Right ventricle myocardium inferior (tissue), 1 donor: ENCODE measurements at regions of chr10 and their contacts with region 1.

Region 1: GRCh38 chr10:51063659-51064535 is 10.4 kb upstream of the PRKG1 start:
- DNase-seq: no peak
- ATAC-seq: peak; percentile 54

Region 2: DNA sequence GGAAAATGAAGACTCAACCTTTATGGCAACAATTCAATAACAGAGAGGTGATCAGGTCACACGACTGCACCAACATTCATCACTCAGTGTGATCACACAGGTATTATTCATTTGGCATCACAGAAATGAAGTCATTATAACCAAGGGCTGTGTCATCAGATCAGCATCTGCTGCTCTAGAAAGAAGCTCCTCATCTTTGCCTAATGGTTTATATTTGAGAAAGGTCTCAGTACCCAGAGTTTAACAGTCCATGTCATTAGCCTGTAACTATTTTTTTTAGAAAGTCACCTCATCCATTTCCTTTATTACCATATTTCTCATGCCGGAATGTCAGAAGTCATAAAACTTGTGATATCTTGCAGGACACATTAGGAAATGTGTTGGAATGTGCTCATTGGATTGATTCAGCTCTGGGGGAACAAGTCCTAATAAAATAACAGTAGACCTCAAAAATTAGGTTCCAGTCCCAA is 34.7 kb before region 1 on chr10:
- intact Hi-C with region 1: no loop called
- DNase-seq: no peak
- ATAC-seq: no peak

Region 3: DNA sequence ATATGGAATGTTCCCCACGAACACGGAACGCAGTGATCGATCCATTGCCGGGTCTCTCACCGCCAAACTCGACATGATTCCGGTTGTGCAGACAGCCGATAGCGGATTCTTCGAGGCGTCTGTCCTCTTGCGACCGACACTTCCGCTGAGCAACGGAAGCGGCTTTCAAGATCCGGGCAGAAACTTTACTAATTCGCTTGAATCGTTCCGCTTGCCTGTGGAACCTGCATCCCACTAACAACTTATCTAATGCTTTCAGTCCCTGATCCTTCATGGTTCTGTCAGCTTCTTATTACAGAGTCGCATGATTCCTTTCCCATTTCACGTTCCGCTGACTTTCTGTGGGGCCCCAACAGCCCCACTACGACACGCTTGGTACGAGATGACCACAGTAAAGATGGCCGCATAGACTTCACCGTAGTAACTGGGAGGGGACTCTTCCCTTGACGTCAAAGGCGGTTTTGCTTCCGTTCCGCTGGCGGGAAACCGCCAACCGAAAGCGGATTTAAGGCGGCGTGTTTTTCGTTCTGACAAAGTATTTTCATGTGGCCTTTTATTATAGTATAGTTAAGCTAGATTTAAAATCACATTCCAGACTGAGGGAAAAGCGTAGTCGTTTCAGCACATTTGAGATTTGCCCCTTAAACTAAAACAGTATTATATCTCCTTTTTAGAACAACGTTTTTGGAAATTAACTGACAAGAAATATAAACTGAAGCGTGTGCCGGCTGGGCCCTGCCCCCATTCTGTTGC is 635.8 kb after region 1 on chr10 and contains the start of gene CSTF2T:
- intact Hi-C with region 1: loop called (anchors 10 kb)
- DNase-seq: peak; percentile 87
- ATAC-seq: peak; percentile 96
- total RNA-seq, gene CSTF2T: 21.3 TPM

Region 4: GRCh38 chr10:51960494-51960895 is 896.6 kb after region 1 on chr10:
- intact Hi-C with region 1: loop called (anchors 5 kb)
- DNase-seq: no peak
- ATAC-seq: peak; percentile 77

Region 5: GRCh38 chr10:52215745-52216361 is 1152.0 kb after region 1 on chr10:
- intact Hi-C with region 1: loop called (anchors 5 kb)
- DNase-seq: no peak
- ATAC-seq: peak; percentile 51